Posterior vena cava (tissue), 2 donors: ENCODE measurements at regions of chr1 and their contacts with region 1.

Region 1: GRCh38 chr1:245673881-245674414 is 519.2 kb downstream of the KIF26B start:
- DNase-seq: no peak

Region 2: DNA sequence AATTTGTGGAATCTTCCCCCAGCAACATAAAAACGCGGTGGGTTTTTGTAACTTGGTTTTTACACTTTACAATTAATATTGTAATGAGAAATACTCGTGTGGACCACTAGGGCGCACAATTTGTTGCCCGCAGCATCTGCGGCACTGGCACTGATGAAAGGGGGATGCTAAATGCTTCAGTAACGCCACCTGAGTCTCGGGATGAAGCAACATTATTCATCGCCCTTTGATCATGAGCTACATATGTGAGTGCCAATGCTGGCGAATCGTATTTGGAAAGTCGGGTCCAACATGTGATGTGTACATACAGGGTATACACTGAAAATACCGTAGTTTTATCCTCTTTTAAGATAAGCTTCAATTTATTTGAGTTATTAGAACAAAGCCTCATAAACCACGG is 872.7 kb before region 1 on chr1:
- intact Hi-C with region 1: no loop called
- DNase-seq: no peak

Region 3: DNA sequence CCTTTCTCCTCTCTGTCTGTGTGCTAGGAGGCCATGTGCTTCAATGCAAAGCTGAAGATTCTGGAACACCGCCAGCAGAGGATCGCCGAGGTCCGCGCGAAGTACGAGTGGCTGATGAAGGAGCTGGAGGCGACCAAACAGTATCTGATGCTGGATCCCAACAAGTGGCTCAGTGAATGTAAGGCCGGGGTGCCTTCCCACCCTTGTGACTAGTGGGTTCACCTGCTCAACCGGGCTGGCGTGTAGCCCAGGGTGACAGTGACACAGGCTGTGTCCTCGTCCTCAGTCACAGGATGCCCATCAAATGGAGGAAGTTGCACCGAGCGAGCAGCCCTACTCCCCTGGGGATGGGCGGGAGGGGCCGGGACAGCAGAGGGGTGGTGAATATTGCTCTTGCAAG is 24.9 kb after region 1 on chr1:
- intact Hi-C with region 1: loop called in 1 of 2 experiments (anchors 1 kb)
- DNase-seq: no peak

Region 4: GRCh38 chr1:245765230-245766000 is 91.5 kb after region 1 on chr1:
- intact Hi-C with region 1: no loop called
- DNase-seq: no peak

Region 5: DNA sequence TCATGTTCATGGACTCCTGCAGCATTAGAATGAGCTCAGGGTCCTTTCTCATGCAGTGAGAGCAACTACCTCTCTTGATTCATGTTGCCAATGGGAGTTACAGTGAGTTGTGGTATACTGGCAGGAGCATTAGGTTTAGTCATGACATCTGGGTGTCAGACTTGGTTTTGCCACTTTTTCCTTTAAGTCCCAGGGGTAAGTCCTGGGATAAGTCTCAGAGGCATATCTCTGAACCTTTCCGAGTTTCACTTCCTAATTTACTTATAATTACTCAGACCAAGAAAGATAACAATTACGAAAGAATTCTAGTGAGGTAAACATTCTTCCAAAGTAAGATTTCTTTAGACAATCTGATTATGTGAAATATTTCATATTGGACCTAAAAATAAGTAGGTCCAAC is 227.1 kb after region 1 on chr1:
- intact Hi-C with region 1: no loop called
- DNase-seq: no peak